ENCODE measurements at regions of chr5 and their contacts with region 1.

Region 1: GRCh38 chr5:157189223-157189622 is 8.6 kb downstream of the ITK start:
- DNase-seq: no peak
- ATAC-seq: no peak
- H3K4me3 ChIP-seq: peak overlapping the region; percentile 18 to 40
- H3K4me3 Mint-ChIP-seq: peak overlapping the region; percentile 85
- H3K27ac ChIP-seq: peak overlapping the region; percentile 34 to 83
- H3K27ac Mint-ChIP-seq: peak overlapping the region; percentile 93
- H3K4me1 ChIP-seq: peaks cover 86% of the 10 kb centered on the region
- H3K4me1 Mint-ChIP-seq: peaks cover 86% of the 10 kb centered on the region
- H3K27me3 ChIP-seq: no peaks in the 10 kb centered on the region
- H3K27me3 Mint-ChIP-seq: no peaks in the 10 kb centered on the region
- CTCF ChIP-seq: no peak

Region 2: DNA sequence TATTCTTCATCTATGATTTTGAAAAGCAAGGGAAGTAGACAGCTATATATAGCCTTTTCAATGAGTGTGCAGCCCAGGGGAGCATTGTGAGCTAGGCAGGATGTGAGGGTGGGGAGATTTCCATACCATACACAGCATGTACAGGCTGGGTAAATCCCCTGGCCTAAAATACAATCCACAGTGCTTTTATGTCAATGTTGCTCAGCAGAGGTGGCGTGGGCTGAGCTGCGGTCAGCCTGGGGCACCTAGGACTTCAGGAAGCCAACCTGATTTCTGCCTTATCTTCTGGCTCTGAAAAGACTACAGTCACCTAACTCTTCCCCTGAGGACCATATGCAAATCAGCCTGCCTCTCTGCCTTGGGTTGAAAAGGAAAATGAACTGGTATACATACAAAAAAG is 16.8 kb before region 1 on chr5:
- CTCF ChIA-PET with region 1: interaction called, 5 read pairs
- POLR2A ChIA-PET with region 1: interaction called, 8 read pairs
- intact Hi-C with region 1: loop called in 1 of 2 experiments (anchors 2 kb)
- DNase-seq: peak in 8 of 9 experiments; percentile 40 to 93 (median 66)
- ATAC-seq: peak; percentile 96
- H3K4me3 ChIP-seq: peak overlapping the region in 1 of 2 experiments; percentile 4
- H3K4me3 Mint-ChIP-seq: peak overlapping the region; percentile 46
- H3K27ac ChIP-seq: peak overlapping the region; percentile 4 to 59
- H3K27ac Mint-ChIP-seq: peak overlapping the region; percentile 92
- H3K4me1 ChIP-seq: peaks cover 40% of the 10 kb centered on the region
- H3K4me1 Mint-ChIP-seq: peaks cover 65% of the 10 kb centered on the region
- H3K27me3 ChIP-seq: no peaks in the 10 kb centered on the region
- H3K27me3 Mint-ChIP-seq: no peaks in the 10 kb centered on the region
- CTCF ChIP-seq: no peak

Region 3: GRCh38 chr5:157204765-157205164 is 15.5 kb after region 1 on chr5:
- CTCF ChIA-PET with region 1: interaction called, 42 read pairs
- POLR2A ChIA-PET with region 1: interaction called, 56 read pairs
- intact Hi-C with region 1: loop called in 1 of 2 experiments (anchors 1 kb)
- DNase-seq: peak in 3 of 9 experiments; percentile 41 to 81 (median 60)
- ATAC-seq: peak; percentile 53
- H3K4me3 ChIP-seq: peak overlapping the region in 1 of 2 experiments; percentile 35
- H3K4me3 Mint-ChIP-seq: peak overlapping the region; percentile 54
- H3K27ac ChIP-seq: peak overlapping the region; percentile 34 to 74
- H3K27ac Mint-ChIP-seq: peak overlapping the region; percentile 92
- H3K4me1 ChIP-seq: peaks cover 96% of the 10 kb centered on the region
- H3K4me1 Mint-ChIP-seq: peaks cover 85% of the 10 kb centered on the region
- H3K27me3 ChIP-seq: no peaks in the 10 kb centered on the region
- H3K27me3 Mint-ChIP-seq: no peaks in the 10 kb centered on the region
- CTCF ChIP-seq: no peak

Region 4: DNA sequence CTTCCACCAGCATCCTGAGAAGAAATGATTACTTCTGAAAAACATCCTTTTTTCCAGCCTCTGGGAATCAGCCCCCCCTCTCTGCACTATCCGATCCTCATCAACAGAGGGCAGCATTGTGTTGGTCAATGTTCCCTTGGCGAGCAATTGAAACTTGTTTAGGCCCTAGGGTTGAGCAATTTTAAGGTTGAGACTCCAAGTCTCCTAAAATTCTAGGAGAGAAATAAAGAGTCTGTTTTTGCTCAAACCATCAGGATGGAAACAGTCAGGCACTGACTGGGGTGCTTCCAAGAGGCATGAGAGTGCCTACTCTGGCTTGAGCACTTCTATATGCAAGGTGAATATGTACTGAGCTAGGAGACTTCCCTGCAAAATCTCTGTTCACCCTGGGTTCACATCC is 64.3 kb after region 1 on chr5:
- CTCF ChIA-PET with region 1: interaction called, 11 read pairs
- POLR2A ChIA-PET with region 1: interaction called, 12 read pairs
- intact Hi-C with region 1: no loop called
- DNase-seq: peak in 1 of 9 experiments; percentile 29
- ATAC-seq: no peak
- H3K4me3 ChIP-seq: no peak overlapping the region
- H3K4me3 Mint-ChIP-seq: peak overlapping the region; percentile 61
- H3K27ac ChIP-seq: peak overlapping the region; percentile 61 to 72
- H3K27ac Mint-ChIP-seq: peak overlapping the region; percentile 92
- H3K4me1 ChIP-seq: peaks cover 97% of the 10 kb centered on the region
- H3K4me1 Mint-ChIP-seq: peaks cover 93% of the 10 kb centered on the region
- H3K27me3 ChIP-seq: no peaks in the 10 kb centered on the region
- H3K27me3 Mint-ChIP-seq: no peaks in the 10 kb centered on the region
- CTCF ChIP-seq: peak; percentile 54

Measured in CD8-positive, alpha-beta T cell (primary cell).